Activated B cell treated with CpG ODN at 0.5 μM for 24 hours (primary cell): ENCODE measurements at regions of chr10 and their contacts with region 1.

Region 1: DNA sequence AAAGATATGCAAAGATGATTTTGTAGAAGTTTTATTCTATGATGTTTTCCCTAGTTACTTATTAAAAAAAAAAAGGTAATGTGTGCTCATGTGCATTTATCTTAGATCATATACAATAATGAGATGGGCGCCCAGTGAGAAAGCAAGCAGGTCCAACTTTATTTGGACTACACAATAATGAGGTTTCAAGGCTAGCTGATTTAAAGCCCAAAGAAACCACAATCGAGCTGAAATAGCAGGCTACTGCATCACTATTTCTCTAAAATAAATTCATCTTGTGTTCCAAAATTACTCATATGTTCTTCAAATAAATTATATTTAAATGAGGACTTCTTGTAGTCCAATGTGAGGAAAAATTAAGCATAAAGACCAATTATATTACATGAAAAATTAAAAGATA is 110.1 kb downstream of the JMJD1C start:
- DNase-seq: no peak
- ATAC-seq: no peak
- H3K4me3 Mint-ChIP-seq: no peak overlapping the region
- H3K27ac Mint-ChIP-seq: peak overlapping the region; percentile 32
- H3K4me1 Mint-ChIP-seq: peaks cover 22% of the 10 kb centered on the region
- H3K27me3 Mint-ChIP-seq: no peaks in the 10 kb centered on the region
- CTCF ChIP-seq: no peak

Region 2: GRCh38 chr10:63343476-63343875 is 12.2 kb before region 1 on chr10:
- CTCF ChIA-PET with region 1: no interaction called
- POLR2A ChIA-PET with region 1: no interaction called
- intact Hi-C with region 1: loop called (anchors 2 kb)
- DNase-seq: no peak
- ATAC-seq: no peak
- H3K4me3 Mint-ChIP-seq: no peak overlapping the region
- H3K27ac Mint-ChIP-seq: no peak overlapping the region
- H3K4me1 Mint-ChIP-seq: peaks cover 4% of the 10 kb centered on the region
- H3K27me3 Mint-ChIP-seq: no peaks in the 10 kb centered on the region
- CTCF ChIP-seq: no peak

Region 3: DNA sequence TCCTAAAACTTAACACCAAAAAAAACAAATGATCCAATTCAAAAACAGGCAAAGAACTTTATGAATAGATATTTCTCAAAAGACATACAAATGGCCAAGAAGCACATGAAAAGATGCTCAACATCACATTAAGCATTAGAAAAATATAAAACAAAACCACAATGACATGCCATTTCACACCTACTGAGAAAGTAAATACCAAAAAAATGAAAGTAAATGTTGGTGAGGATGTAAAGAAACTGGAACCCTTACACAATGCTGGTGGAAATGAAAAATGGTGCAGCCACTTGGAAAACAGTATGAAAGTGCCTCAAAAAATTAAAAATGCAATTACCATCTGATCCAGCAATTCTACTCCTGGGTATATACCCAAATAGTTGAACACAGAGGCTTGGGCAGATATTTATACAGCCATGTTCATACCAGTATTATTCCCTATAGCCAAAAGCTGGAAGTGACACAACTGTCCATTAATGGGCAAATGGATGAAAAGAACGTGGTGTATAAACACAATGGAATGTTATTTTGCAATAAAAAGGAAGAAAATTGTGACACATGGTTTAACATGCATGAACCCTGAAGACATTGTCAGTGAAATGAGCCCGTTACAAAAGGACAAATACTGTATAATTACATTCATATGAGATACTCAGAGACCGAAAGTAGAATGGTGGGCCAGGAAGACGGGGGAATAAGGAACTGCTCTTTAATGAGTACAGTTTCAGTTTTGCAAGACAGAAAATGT is 21.1 kb after region 1 on chr10:
- CTCF ChIA-PET with region 1: interaction called, 3 read pairs
- POLR2A ChIA-PET with region 1: no interaction called
- intact Hi-C with region 1: loop called (anchors 2 kb)
- DNase-seq: no peak
- ATAC-seq: peak; percentile 92
- H3K4me3 Mint-ChIP-seq: peak overlapping the region; percentile 72
- H3K27ac Mint-ChIP-seq: peak overlapping the region; percentile 53
- H3K4me1 Mint-ChIP-seq: peaks cover 15% of the 10 kb centered on the region
- H3K27me3 Mint-ChIP-seq: no peaks in the 10 kb centered on the region
- CTCF ChIP-seq: no peak

Region 4: GRCh38 chr10:63528084-63528747 is 172.5 kb after region 1 on chr10:
- CTCF ChIA-PET with region 1: no interaction called
- POLR2A ChIA-PET with region 1: no interaction called
- intact Hi-C with region 1: no loop called
- DNase-seq: no peak
- ATAC-seq: no peak
- H3K4me3 Mint-ChIP-seq: no peak overlapping the region
- H3K27ac Mint-ChIP-seq: no peak overlapping the region
- H3K4me1 Mint-ChIP-seq: peaks cover 15% of the 10 kb centered on the region
- H3K27me3 Mint-ChIP-seq: no peaks in the 10 kb centered on the region
- CTCF ChIP-seq: no peak